Sciatic nerve (tissue), 2 donors: ENCODE measurements at regions of chr19 and their contacts with region 1.

Region 1: DNA sequence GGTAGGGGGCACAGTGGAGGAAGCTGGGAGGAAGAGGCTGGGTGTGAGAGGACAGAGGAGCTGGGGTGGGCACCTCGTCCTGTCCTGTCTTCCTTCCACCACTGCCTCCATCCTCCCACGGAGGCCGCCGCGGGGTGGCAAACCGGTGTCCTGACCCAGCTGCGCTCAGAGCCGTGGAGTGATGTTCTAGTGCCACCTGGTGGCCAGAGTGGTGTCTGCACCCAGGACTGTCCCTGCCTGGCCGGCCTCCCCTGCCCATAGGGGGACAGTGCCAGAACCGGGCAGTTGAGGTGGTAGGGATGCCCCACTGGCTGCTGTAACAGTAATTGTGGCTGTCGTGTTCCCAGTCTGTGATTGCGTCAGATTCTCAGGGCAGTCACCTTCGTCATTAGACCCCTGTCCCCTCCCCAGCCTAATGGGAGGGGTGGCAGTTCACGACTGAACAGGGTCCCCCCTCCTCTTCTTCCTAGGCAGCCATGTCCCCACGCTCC is 11.1 kb upstream of the ARRDC2 start:
- DNase-seq: peak; percentile 94
- ATAC-seq: peak; percentile 82

Region 2: GRCh38 chr19:17859533-17860330 is 137.1 kb before region 1 on chr19 and contains the start of gene RPL18A:
- intact Hi-C with region 1: loop called (anchors 10 kb)
- DNase-seq: peak; percentile 99
- ATAC-seq: peak; percentile 99
- total RNA-seq, gene RPL18A: 1,112 TPM

Region 3: GRCh38 chr19:17938092-17938845 is 58.6 kb before region 1 on chr19:
- intact Hi-C with region 1: loop called (anchors 2 kb)
- DNase-seq: peak; percentile 88
- ATAC-seq: peak; percentile 88